Ovary (tissue), 10 donors: ENCODE measurements at regions of chr9 and their contacts with region 1.

Region 1: GRCh38 chr9:113454914-113455761 is 8.4 kb upstream of the RGS3 start:
- DNase-seq: peak; percentile 46 to 69 (median 65)
- H3K4me3 ChIP-seq: no peak overlapping the region
- H3K27ac ChIP-seq: peak overlapping the region; percentile 26 to 90
- H3K4me1 ChIP-seq: peaks cover 13% of the 10 kb centered on the region
- H3K27me3 ChIP-seq: no peaks in the 10 kb centered on the region
- CTCF ChIP-seq: no peak
- EP300 ChIP-seq: no peak
- POLR2A ChIP-seq: no peak

Region 2: DNA sequence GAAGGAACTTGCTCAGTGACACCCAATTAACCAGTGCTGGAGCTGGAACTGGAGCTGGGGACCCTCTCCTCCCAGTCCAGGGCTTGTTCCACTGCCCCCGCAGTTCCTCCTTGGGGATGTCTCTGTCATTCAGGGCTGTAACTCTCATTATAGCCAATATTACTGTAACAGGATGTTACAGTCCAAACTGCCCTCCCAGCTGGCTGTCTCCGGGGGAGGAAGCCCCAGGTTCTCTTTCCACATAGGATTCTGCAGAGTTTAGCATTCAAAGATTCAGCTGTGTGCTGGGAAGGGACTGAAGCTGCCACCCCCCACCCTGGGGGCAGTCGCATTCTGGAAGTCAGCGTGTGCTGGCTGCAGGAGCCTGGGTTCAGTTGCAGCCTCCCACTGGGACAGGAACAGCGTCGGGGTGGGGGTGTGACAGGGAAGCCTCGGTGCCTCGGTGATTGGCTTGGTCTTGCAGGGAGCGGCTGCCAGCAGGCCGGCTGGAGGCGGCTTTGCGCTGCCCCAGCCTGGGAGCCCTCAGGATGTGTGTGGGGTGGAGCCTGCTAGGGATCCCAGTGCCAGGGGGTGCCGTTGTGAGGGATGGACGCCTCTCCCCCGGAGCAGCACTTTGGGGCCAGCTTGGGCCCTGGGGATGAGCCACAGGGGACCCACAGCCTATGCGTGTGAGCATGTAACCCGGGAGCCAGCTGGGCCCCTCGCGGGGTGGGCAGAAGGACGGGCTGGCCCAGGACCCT is 109.5 kb after region 1 on chr9:
- intact Hi-C with region 1: loop called in 1 of 4 experiments (anchors 5 kb)
- DNase-seq: peak; percentile 41 to 64 (median 62)
- H3K4me3 ChIP-seq: peak overlapping the region; percentile 7
- H3K27ac ChIP-seq: no peak overlapping the region
- H3K4me1 ChIP-seq: peaks cover 33% of the 10 kb centered on the region
- H3K27me3 ChIP-seq: no peaks in the 10 kb centered on the region
- CTCF ChIP-seq: no peak
- EP300 ChIP-seq: no peak
- POLR2A ChIP-seq: no peak

Region 3: DNA sequence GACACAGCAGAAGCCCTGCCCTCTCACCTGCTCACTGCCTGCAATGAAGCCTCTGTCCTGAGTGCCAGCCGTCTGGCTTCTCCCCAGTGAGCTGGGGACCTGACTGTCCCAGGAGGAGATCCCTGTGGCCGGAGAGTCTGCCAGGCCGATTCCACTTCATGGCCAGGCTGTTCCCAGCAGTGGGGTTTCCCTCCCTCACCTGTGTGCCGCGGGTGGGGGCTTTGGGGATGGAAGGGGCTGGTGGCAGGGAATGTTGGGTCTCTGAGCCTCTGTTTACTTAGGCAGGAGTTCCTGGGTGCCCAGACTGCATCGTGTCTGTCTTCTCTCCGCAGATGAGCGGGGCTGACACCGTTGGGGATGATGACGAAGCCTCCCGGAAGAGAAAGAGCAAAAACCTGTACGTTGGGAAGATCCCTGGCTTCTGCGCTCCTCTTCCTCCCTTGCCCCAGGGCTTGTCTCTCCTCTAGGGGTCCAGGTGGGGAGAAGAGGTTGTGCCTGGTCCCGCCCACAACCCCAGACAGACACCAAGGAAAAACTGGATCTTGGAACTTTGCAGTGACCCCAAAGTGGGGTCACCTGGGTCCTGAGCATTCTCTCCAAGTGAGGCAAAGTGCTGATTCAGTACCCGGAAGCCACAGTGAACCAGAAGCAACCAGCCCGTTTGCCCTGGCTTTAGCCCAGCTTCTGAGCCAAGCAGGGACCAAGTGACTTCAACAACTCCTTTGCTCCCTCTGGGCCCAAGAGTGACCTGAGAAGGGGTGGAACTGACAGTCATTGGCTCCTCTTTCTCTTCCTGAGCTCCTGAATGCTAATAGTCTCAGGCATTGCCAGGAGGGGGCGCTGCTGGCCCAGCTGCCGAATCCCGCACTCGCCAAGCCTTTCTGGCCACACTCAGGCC is 136.1 kb after region 1 on chr9:
- intact Hi-C with region 1: no loop called
- DNase-seq: peak; percentile 81 to 93 (median 90)
- H3K4me3 ChIP-seq: no peak overlapping the region
- H3K27ac ChIP-seq: peak overlapping the region in 1 of 2 donors; percentile 19
- H3K4me1 ChIP-seq: peaks cover 8% of the 10 kb centered on the region
- H3K27me3 ChIP-seq: no peaks in the 10 kb centered on the region
- CTCF ChIP-seq: peak; percentile 83 to 93 (median 92)
- EP300 ChIP-seq: no peak
- POLR2A ChIP-seq: no peak